ENCODE measurements at regions of chr6 and their contacts with region 1.

Region 1: DNA sequence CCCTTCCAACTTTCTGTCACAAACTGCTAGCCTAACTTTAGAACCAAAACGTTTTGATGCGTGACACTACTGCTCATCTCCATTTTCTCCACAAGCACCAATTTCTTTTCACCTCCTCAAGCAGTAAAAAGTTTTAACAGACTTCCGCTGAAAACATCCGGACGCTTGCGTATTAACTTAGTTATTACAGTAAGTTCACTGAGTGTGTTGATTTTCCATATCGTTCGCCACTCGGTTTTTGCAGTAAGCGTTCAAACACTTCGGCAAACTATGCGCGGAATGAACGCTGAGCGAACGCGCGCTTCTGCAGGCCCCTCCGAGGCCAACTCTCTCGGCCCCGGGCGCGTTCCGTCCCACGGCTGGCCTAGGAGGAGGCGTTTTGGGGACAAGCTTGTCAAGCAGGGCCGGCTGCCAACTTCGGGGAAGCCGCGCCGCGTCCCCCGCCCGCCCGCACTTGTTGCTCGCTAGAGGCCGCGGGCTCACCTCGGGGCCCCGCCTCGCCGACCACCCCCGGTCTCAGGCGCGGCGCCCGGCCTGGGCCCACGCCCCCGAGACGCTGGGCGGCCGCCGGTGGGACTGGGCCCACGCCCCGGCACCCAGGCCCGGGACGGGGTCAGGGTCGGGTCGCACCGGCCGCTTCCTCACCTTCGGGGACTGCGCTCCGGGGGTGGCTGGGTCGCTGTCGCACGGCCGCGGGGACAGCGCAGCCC is 945 bp downstream of the PHF10 start:
- DNase-seq: peak; percentile 66
- ATAC-seq: peak; percentile 35
- H3K4me3 ChIP-seq: peak overlapping the region; percentile 93
- H3K27ac ChIP-seq: peak overlapping the region; percentile 44
- H3K4me1 ChIP-seq: peaks cover 4% of the 10 kb centered on the region; the same call in 1 of the 2 replicates
- H3K27me3 ChIP-seq: no peaks in the 10 kb centered on the region
- CTCF ChIP-seq: no peak
- POLR2A ChIP-seq: peak; percentile 79; the same call in 1 of the 2 replicates
- RAD21 ChIP-seq: no peak

Region 2: DNA sequence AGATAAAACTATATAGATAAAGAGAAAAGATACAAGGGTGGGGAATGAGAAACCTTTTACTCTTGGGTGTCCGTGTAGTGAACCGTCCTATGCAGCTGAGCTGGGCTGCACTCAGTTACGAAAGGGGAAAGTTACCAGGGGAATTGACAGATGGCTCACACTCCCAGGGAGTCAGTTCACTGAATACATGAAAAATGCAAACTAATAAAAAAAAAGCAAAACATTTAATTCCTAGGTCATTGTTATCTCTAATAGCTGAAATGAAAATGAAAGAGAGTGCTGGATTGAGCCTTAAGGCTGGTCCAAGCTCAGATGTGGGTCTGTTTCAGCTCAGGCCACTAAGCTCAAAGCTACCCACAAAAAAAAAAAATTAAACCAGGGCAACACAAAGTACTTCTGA is 607.7 kb before region 1 on chr6:
- CTCF ChIA-PET with region 1: no interaction called
- POLR2A ChIA-PET with region 1: no interaction called
- dilution Hi-C with region 1: no loop called
- in situ Hi-C with region 1: no loop called
- intact Hi-C with region 1: no loop called
- DNase-seq: peak; percentile 11
- ATAC-seq: peak; percentile 61
- H3K4me3 ChIP-seq: no peak overlapping the region
- H3K27ac ChIP-seq: no peak overlapping the region
- H3K4me1 ChIP-seq: no peaks in the 10 kb centered on the region
- H3K27me3 ChIP-seq: no peaks in the 10 kb centered on the region; the same call in 1 of the 2 replicates
- CTCF ChIP-seq: no peak
- POLR2A ChIP-seq: no peak
- RAD21 ChIP-seq: no peak

Region 3: DNA sequence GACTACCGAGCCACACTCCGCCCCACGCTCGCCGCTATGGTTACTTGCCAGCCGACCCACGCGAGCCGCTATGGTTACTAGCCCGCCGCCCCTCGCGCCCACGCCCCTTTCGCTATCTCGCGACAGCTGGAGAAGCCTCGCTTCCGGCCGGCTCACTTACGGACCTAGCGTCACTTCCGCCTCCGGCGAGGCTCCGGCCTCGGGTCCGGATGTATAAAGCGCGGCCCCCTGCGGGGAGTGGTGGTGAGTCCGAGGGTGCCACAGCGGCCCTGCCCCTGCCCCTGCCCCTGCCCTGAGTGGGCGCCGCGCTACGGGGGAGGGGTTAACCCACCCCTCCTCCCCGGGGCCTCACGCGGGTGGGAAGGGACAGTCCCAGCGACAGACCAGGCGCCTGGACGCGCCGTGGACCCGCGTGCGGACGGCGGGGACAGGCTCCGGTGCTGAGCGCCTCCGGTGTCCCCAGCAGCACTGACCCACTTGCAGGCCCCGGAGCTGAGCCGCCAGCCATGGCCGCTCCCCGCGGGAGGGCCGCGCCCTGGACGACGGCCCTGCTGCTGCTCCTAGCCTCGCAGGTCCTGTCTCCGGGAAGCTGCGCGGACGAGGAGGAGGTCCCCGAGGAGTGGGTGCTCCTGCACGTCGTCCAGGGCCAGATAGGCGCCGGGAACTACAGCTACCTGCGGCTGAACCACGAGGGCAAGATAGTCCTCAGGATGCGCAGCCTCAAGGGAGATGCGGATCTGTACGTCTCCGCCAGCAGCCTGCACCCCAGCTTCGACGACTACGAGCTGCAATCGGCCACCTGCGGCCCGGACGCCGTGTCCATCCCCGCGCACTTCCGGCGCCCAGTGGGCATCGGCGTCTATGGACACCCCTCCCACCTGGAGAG is 21.2 kb before region 1 on chr6 and contains the starts of genes C6orf120 and WDR27:
- CTCF ChIA-PET with region 1: interaction called, 3 read pairs
- POLR2A ChIA-PET with region 1: no interaction called
- dilution Hi-C with region 1: no loop called
- in situ Hi-C with region 1: no loop called
- intact Hi-C with region 1: loop called (anchors 2 kb)
- DNase-seq: peak; percentile 95
- ATAC-seq: peak; percentile 93
- H3K4me3 ChIP-seq: peak within 1 kb of the TSS; percentile 76
- H3K27ac ChIP-seq: peak within 1 kb of the TSS; percentile 89
- H3K4me1 ChIP-seq: peaks cover 9% of the 10 kb centered on the region
- H3K27me3 ChIP-seq: no peaks in the 10 kb centered on the region
- CTCF ChIP-seq: no peak
- POLR2A ChIP-seq: peak; percentile 86
- RAD21 ChIP-seq: no peak; the same call in 1 of the 2 replicates
- total RNA-seq, gene C6orf120: 26.7 and 44.2 TPM in 2 replicates
- total RNA-seq, gene WDR27: 7.0 and 7.8 TPM in 2 replicates

Region 4: GRCh38 chr6:169738204-169738975 is 15.0 kb after region 1 on chr6:
- CTCF ChIA-PET with region 1: no interaction called
- POLR2A ChIA-PET with region 1: no interaction called
- dilution Hi-C with region 1: no loop called
- in situ Hi-C with region 1: no loop called
- intact Hi-C with region 1: no loop called
- DNase-seq: no peak
- ATAC-seq: peak; percentile 47; the same call in 1 of the 2 replicates
- H3K4me3 ChIP-seq: no peak overlapping the region
- H3K27ac ChIP-seq: no peak overlapping the region
- H3K4me1 ChIP-seq: peaks cover 2% of the 10 kb centered on the region; the same call in 1 of the 2 replicates
- H3K27me3 ChIP-seq: peaks cover 4% of the 10 kb centered on the region
- CTCF ChIP-seq: no peak
- POLR2A ChIP-seq: no peak
- RAD21 ChIP-seq: no peak

Region 5: DNA sequence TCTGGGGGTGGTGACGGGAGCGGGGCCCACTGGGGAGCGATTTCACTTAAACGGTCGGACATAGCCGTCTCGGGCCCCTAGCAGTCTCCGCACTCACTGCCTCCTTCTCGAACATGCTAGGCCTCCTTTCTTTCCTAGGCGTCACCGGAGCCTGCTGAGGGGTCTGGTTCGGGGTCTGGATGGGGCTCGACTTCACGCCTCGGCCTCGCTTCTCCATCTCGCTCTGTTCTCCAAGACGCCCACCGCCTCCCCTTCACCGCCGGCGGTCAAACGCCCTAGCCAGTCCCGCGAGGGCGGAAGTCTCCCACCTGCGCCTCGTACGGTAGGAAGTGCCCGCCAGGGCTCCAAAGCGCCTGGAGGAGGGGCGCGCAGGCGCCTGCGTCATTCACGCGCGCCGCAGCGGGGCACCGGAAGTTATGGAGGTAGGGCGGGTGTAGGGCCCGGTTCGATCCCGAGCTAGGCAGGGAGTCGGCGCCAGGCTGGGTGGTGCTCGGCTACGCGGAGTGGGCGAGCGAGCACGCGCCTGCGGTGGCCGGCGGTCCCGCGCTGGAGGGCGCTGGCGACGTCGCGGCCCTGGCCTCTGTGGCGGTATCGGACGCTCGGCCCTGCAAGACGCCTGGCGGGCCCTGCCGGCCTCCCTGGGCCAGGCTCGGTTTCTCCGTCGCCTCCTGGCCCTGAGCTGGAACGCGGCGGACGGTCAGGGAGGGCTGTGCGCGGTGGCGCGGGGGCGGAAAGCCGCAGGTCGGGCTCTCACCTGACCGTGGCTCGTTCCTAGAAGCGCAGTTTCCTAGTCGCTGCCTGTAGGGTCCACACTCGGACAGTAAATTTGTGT is 28.1 kb after region 1 on chr6 and contains the starts of genes DYNLT2 and ERMARD:
- CTCF ChIA-PET with region 1: interaction called, 3 read pairs
- POLR2A ChIA-PET with region 1: no interaction called
- dilution Hi-C with region 1: no loop called
- in situ Hi-C with region 1: no loop called
- intact Hi-C with region 1: loop called (anchors 2 kb)
- DNase-seq: peak; percentile 94
- ATAC-seq: peak; percentile 98
- H3K4me3 ChIP-seq: peak within 1 kb of the TSS; percentile 89
- H3K27ac ChIP-seq: peak within 1 kb of the TSS; percentile 94
- H3K4me1 ChIP-seq: 0 out of 2 replicates have a peak, but pooled peaks cover 2% of the 10 kb centered on the region
- H3K27me3 ChIP-seq: no peaks in the 10 kb centered on the region
- CTCF ChIP-seq: peak; percentile 23; the same call in 1 of the 2 replicates
- POLR2A ChIP-seq: peak; percentile 95
- RAD21 ChIP-seq: peak; percentile 8; the same call in 1 of the 2 replicates
- total RNA-seq, gene DYNLT2: 0.36 and 1.1 TPM in 2 replicates
- total RNA-seq, gene ERMARD: 15.1 and 17.2 TPM in 2 replicates

Region 6: DNA sequence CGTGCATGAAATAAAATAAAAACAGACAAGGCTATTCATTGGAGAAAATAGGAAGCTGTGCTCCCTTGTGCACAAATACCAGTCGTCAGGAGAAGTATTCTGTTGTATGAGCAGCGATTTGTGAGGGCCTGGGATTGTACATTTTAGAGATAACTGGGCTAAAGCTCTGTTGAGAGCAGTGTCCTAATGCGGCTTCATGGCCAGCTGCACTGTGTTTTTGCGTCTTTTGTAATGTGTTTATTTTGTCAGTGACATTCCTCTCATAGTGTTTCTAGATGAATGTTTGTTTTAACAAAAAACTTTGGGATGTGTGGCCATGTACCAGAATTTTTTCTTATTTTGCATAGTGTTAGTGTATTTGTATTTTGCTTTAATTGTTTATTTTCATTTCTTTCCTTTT is 42.9 kb after region 1 on chr6:
- CTCF ChIA-PET with region 1: no interaction called
- POLR2A ChIA-PET with region 1: no interaction called
- dilution Hi-C with region 1: no loop called
- in situ Hi-C with region 1: no loop called
- intact Hi-C with region 1: loop called (anchors 1 kb)
- DNase-seq: peak; percentile 88
- ATAC-seq: peak; percentile 96
- H3K4me3 ChIP-seq: no peak overlapping the region
- H3K27ac ChIP-seq: peak overlapping the region; percentile 85; the same call in 1 of the 2 replicates
- H3K4me1 ChIP-seq: peaks cover 21% of the 10 kb centered on the region
- H3K27me3 ChIP-seq: no peaks in the 10 kb centered on the region
- CTCF ChIP-seq: no peak
- POLR2A ChIP-seq: no peak
- RAD21 ChIP-seq: no peak

Region 7: DNA sequence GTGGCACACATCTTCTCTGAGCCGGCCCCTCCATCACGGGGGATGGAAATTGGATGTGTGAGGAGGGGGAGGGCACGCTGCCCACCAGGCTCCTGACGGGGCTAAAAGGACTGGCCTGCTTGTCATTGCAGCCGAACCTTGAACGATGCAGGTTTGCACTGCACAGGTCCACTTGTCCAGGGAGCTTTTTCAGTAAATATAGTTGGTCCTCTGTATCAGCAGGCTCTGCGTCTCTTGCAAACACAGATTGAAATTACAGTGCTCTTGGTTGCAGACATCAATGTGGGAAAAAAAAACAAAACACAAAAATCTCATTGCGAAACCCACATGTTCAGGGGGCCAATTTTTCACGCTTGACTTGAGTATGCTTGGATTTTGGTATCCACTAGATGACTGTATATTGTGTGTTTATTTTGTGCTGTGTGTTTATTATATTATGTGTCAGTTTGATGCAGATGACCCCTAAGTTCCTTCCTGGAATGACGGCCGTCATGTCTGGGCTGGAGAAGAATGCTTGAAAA is 57.3 kb after region 1 on chr6:
- CTCF ChIA-PET with region 1: no interaction called
- POLR2A ChIA-PET with region 1: no interaction called
- dilution Hi-C with region 1: no loop called
- in situ Hi-C with region 1: no loop called
- intact Hi-C with region 1: loop called (anchors 2 kb)
- DNase-seq: peak; percentile 90
- ATAC-seq: peak; percentile 84
- H3K4me3 ChIP-seq: no peak overlapping the region
- H3K27ac ChIP-seq: peak overlapping the region; percentile 74; the same call in 1 of the 2 replicates
- H3K4me1 ChIP-seq: peaks cover 12% of the 10 kb centered on the region
- H3K27me3 ChIP-seq: no peaks in the 10 kb centered on the region
- CTCF ChIP-seq: no peak
- POLR2A ChIP-seq: no peak
- RAD21 ChIP-seq: no peak

Region 8: DNA sequence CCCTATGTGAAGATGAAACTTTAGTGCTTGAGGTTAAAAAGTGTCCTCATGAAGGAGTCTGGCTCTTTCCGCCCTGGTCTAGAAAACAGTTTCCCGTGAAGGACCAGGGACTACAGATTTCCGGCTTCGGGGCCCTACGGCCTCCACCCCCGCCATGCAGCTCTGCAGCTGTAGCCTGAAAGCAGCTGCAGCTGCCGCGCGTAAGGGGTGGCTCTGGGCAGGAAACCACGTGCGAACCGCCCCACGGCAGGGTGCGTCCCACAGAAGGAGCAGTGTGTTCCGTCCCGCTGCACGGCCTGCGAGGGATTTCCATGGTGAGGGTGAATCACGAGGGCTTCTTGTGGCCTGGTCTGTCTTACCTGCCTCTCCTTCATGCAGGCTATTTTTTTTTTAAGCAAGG is 145.1 kb after region 1 on chr6:
- CTCF ChIA-PET with region 1: no interaction called
- POLR2A ChIA-PET with region 1: no interaction called
- dilution Hi-C with region 1: no loop called
- in situ Hi-C with region 1: no loop called
- intact Hi-C with region 1: no loop called
- DNase-seq: no peak
- ATAC-seq: no peak
- H3K4me3 ChIP-seq: no peak overlapping the region
- H3K27ac ChIP-seq: no peak overlapping the region
- H3K4me1 ChIP-seq: no peaks in the 10 kb centered on the region
- H3K27me3 ChIP-seq: no peaks in the 10 kb centered on the region
- CTCF ChIP-seq: no peak
- POLR2A ChIP-seq: no peak
- RAD21 ChIP-seq: no peak

Region 9: GRCh38 chr6:169978615-169979513 is 255.5 kb after region 1 on chr6:
- CTCF ChIA-PET with region 1: no interaction called
- POLR2A ChIA-PET with region 1: no interaction called
- dilution Hi-C with region 1: no loop called
- in situ Hi-C with region 1: no loop called
- intact Hi-C with region 1: no loop called
- DNase-seq: peak; percentile 15
- ATAC-seq: no peak
- H3K4me3 ChIP-seq: no peak overlapping the region
- H3K27ac ChIP-seq: no peak overlapping the region
- H3K4me1 ChIP-seq: no peaks in the 10 kb centered on the region
- H3K27me3 ChIP-seq: no peaks in the 10 kb centered on the region
- CTCF ChIP-seq: no peak
- POLR2A ChIP-seq: no peak
- RAD21 ChIP-seq: no peak

Region 10: DNA sequence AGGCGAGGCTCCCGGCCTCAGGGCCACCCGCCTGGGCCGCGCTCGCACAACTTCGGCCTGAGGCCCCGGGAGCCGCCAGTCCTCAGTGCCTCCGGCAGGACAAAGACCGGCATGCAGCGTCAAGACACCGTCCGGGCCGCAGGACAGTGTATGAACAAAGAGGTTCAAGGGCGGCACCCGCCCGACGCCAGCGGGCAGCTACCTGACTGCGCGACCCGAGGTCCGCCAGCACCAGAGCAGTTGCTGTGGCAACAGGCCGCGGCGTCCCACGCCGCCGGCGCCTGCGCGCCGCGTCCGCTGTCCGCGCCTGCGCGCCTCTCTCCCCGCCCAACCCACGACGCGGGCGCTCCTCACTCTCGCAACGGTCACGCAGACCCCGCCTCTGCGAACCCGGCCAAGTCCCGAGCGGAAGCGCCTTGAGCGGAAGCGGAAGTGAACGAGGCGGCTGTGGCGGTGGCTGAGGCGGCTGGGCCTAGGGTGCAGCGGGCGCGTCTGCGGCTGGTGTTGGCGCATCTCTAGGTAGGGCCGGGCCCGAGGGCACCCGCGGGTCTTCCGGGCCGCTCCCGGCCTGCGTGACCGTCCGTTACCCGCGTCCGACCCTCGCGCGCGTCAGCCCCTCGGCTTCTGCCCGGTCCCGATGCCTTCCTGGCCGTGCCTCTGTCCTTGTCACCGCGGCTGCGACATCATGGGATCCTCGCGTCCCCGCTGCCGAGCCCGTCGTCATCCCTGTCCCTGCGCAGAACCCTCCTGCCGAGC is 583.1 kb after region 1 on chr6 and contains the start of gene FAM120B:
- CTCF ChIA-PET with region 1: no interaction called
- POLR2A ChIA-PET with region 1: no interaction called
- dilution Hi-C with region 1: no loop called
- in situ Hi-C with region 1: no loop called
- intact Hi-C with region 1: loop called (anchors 5 kb)
- DNase-seq: peak; percentile 93
- ATAC-seq: peak; percentile 98
- H3K4me3 ChIP-seq: peak within 1 kb of the TSS; percentile 75
- H3K27ac ChIP-seq: peak within 1 kb of the TSS; percentile 67
- H3K4me1 ChIP-seq: peaks cover 10% of the 10 kb centered on the region
- H3K27me3 ChIP-seq: no peaks in the 10 kb centered on the region
- CTCF ChIP-seq: no peak
- POLR2A ChIP-seq: peak; percentile 91
- RAD21 ChIP-seq: no peak
- total RNA-seq, gene FAM120B: 20.8 and 28.0 TPM in 2 replicates

Region 11: DNA sequence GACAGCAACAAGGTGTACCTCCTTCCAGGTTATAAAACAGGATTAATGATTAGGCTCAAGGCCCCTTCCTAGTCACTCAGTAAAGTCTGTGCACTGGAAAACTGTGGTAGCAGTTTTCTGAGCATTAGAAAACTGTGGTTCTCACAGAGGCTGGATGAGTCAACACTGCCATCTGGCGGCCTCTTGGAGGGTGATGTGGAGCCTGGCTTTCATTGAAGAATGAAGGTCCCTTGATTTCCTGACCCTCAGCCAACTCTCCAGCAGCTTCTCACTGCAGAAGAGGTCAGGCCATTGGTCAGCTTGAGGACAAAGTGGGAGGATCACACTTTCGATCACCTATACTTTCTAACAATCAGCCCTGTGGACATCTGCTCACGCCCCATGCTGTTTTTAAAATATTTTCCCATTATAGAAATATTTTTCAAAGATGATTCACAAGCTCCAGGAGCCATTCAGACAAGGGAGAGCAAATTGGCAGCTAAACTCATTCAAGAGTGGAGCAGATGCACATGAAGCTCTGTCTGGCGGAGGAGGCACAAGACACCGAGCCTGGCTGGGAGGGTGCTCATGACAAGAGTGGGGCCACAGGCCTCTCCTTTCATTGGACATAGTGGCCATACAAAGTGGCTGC is 806.6 kb after region 1 on chr6:
- CTCF ChIA-PET with region 1: no interaction called
- POLR2A ChIA-PET with region 1: no interaction called
- dilution Hi-C with region 1: no loop called
- in situ Hi-C with region 1: loop called (anchors 10 kb)
- intact Hi-C with region 1: loop called (anchors 5 kb)
- DNase-seq: peak; percentile 69
- ATAC-seq: peak; percentile 88
- H3K4me3 ChIP-seq: no peak overlapping the region
- H3K27ac ChIP-seq: no peak overlapping the region
- H3K4me1 ChIP-seq: peaks cover 6% of the 10 kb centered on the region
- H3K27me3 ChIP-seq: no peaks in the 10 kb centered on the region
- CTCF ChIP-seq: peak; percentile 92
- POLR2A ChIP-seq: no peak
- RAD21 ChIP-seq: peak; percentile 95